Astrocyte of the cerebellum (primary cell): ENCODE measurements at regions of chr5 and their contacts with region 1.

Region 1: GRCh38 chr5:44943647-44944046 is 134.9 kb downstream of the MRPS30 start:
- DNase-seq: no peak
- H3K4me3 ChIP-seq: no peak overlapping the region
- CTCF ChIP-seq: no peak

Region 2: GRCh38 chr5:44845777-44846176 is 97.9 kb before region 1 on chr5:
- in situ Hi-C with region 1: loop called (anchors 10 kb)
- DNase-seq: no peak
- H3K4me3 ChIP-seq: no peak overlapping the region
- CTCF ChIP-seq: no peak